ENCODE measurements at regions of chr4 and their contacts with region 1.

Region 1: GRCh38 chr4:150593996-150594395 is 12.0 kb downstream of the MAB21L2 start:
- DNase-seq: no peak
- ATAC-seq: no peak
- H3K4me3 ChIP-seq: no peak overlapping the region
- H3K27ac ChIP-seq: no peak overlapping the region
- H3K4me1 ChIP-seq: peaks cover 7% of the 10 kb centered on the region; the same call in 1 of the 2 replicates
- H3K27me3 ChIP-seq: no peaks in the 10 kb centered on the region
- CTCF ChIP-seq: 0 out of 2 replicates have a peak, but pooled peaks have one; percentile 4
- EP300 ChIP-seq: no peak
- POLR2A ChIP-seq: no peak
- RAD21 ChIP-seq: no peak

Region 2: DNA sequence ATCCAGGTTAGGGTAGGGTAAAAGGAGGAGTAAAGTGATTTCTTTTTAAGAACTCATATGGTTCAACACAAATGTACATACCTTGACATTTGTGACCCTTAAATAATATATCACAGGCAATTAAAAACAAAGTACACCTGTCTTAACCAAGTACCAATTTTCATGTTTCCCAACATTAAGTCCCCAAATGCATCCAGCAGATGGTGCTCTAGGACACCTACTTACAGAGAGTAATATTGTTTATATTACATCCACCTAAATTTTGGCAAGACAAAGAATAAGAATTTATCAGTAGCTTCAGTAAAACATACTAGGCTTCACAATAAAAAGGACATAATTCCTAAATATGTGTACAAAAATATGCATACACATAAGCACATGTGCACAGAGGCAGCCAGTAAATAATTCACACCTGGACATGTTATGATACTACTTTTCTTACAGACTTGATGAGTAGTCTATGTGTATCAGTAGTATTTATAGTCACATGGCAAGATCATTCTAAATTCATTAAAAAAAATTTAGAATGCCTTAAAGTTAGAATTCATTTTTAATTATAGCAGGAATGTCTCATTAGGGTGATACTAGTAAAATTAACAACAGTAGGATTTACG is 296.0 kb before region 1 on chr4:
- CTCF ChIA-PET with region 1: no interaction called
- POLR2A ChIA-PET with region 1: no interaction called
- in situ Hi-C with region 1: no loop called
- intact Hi-C with region 1: loop called (anchors 5 kb)
- DNase-seq: peak; percentile 41
- ATAC-seq: peak; percentile 51; the same call in 2 of the 3 replicates
- H3K4me3 ChIP-seq: no peak overlapping the region
- H3K27ac ChIP-seq: no peak overlapping the region
- H3K4me1 ChIP-seq: no peaks in the 10 kb centered on the region
- H3K27me3 ChIP-seq: no peaks in the 10 kb centered on the region
- CTCF ChIP-seq: peak; percentile 67
- EP300 ChIP-seq: no peak
- POLR2A ChIP-seq: no peak
- RAD21 ChIP-seq: 0 out of 2 replicates have a peak, but pooled peaks have one; percentile 14

Region 3: GRCh38 chr4:150493851-150494250 is 100.1 kb before region 1 on chr4:
- CTCF ChIA-PET with region 1: no interaction called
- POLR2A ChIA-PET with region 1: no interaction called
- in situ Hi-C with region 1: no loop called
- intact Hi-C with region 1: no loop called
- DNase-seq: no peak
- ATAC-seq: no peak
- H3K4me3 ChIP-seq: no peak overlapping the region
- H3K27ac ChIP-seq: no peak overlapping the region
- H3K4me1 ChIP-seq: no peaks in the 10 kb centered on the region
- H3K27me3 ChIP-seq: no peaks in the 10 kb centered on the region
- CTCF ChIP-seq: no peak
- EP300 ChIP-seq: no peak
- POLR2A ChIP-seq: no peak
- RAD21 ChIP-seq: no peak

Region 4: GRCh38 chr4:151389311-151389710 is 795.3 kb after region 1 on chr4:
- CTCF ChIA-PET with region 1: no interaction called
- POLR2A ChIA-PET with region 1: no interaction called
- in situ Hi-C with region 1: no loop called
- intact Hi-C with region 1: no loop called
- DNase-seq: no peak
- ATAC-seq: no peak
- H3K4me3 ChIP-seq: no peak overlapping the region
- H3K27ac ChIP-seq: no peak overlapping the region
- H3K4me1 ChIP-seq: no peaks in the 10 kb centered on the region
- H3K27me3 ChIP-seq: no peaks in the 10 kb centered on the region
- CTCF ChIP-seq: no peak
- EP300 ChIP-seq: no peak
- POLR2A ChIP-seq: no peak
- RAD21 ChIP-seq: no peak